ENCODE measurements at regions of chr1 and their contacts with region 1.

Region 1: DNA sequence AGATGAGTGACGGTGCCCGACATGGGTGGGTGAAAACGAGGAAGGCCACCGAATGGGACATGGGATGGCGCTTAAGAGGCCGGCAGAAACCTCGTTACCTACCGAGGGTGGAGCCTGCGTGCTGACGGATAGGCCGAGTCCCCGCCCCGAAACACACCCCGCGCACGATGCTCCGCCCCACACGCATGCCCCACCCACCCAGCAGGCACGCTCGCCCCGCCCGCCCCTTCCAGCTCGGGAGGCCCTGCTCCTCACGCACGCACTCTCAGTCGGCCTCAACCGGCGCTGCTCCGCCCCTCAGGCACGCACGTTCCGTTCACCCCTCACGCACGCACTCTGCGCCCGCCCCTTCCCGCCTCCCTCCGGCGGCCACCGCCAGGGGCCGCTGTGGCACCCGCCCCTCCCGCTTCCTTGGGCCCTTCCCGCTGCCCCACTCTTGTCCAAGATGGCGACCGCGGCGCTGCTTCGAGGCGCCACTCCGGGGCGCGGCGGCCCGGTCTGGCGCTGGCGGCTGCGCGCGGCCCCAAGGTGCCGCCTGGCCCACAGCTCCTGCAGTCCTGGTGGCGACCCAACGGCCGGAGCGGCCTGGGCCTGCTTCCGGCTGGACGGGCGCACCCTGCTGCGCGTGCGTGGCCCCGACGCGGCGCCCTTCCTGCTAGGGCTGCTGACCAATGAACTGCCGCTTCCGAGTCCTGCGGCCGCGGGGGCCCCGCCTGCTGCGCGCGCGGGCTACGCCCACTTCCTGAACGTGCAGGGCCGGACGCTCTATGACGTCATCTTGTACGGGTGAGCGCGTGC is at the start of gene IBA57:
- DNase-seq: peak; percentile 99 to 100 (median 100)
- ATAC-seq: peak; percentile 77 to 79
- H3K4me3 Mint-ChIP-seq: peak within 1 kb of the TSS; percentile 81 to 93 (median 90)
- H3K27ac Mint-ChIP-seq: peak within 1 kb of the TSS; percentile 89 to 99 (median 97)
- H3K4me1 Mint-ChIP-seq: peaks cover 26 to 67% (median 57%) of the 10 kb centered on the region in 4 donors
- H3K27me3 Mint-ChIP-seq: no peaks in the 10 kb centered on the region
- polyA plus RNA-seq, gene IBA57: 3.3 to 4.2 (median 3.4) TPM

Region 2: DNA sequence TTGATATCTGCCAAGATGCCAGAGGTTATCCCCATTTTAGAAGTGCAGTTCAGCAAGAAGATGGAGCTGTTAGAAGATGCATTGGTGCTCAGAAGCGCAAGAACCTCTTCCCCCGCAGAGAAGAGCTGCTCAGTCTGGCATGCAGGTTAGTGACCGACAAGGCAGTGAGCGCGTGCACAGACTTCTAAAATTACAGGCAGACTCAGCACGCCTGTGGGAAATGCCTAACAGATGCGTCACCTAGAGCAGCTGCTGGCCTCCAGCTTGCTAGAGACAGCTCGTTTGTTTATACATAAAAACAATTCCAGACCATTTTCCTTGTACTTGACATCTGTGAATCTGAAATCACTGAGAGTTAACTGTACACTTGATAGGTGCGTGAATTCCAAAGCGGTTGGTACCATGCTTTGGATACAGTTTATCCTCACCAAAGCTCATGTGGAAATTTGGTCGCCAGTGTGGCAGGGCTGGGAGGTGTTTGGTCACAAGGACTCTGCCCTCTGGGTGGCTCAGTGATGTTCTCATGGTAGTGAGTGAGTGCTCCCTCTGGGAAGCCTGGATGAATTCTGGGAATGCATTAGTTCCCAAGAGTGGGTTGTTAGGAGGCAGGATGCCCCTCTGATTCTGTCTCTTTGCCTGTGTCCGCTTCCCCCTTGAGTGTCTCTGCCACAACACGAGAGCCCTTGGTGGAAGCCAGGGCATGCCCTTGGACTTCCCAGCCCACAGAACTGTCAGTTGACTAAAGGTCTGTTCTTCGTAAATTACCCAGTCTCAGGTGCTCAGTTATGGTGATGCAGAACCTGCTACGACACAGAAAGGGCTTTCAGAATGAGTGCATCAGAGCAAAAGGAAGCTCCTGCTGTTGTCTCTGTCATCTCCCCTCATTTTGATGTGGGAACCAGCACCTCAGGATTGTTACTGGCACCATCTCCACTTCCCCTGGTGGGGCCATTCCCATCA is 405.9 kb before region 1 on chr1:
- POLR2A ChIA-PET with region 1: no interaction called
- DNase-seq: no peak
- ATAC-seq: no peak
- H3K4me3 Mint-ChIP-seq: no peak overlapping the region
- H3K27ac Mint-ChIP-seq: peak overlapping the region in 2 of 10 donors; percentile 36 to 57
- H3K4me1 Mint-ChIP-seq: peaks cover 17 to 41% (median 40%) of the 10 kb centered on the region in 4 donors
- H3K27me3 Mint-ChIP-seq: no peaks in the 10 kb centered on the region

Region 3: GRCh38 chr1:228109073-228109961 is 56.3 kb before region 1 on chr1 and contains the start of gene MRPL55:
- POLR2A ChIA-PET with region 1: interaction called, 10 read pairs
- DNase-seq: peak; percentile 96 to 100 (median 98)
- ATAC-seq: peak; percentile 90
- H3K4me3 Mint-ChIP-seq: peak within 1 kb of the TSS; percentile 88 to 98 (median 94)
- H3K27ac Mint-ChIP-seq: peak within 1 kb of the TSS; percentile 93 to 99 (median 97)
- H3K4me1 Mint-ChIP-seq: peaks cover 9 to 33% (median 31%) of the 10 kb centered on the region in 4 donors
- H3K27me3 Mint-ChIP-seq: no peaks in the 10 kb centered on the region
- polyA plus RNA-seq, gene MRPL55: 96.9 to 130 (median 103) TPM

Region 4: DNA sequence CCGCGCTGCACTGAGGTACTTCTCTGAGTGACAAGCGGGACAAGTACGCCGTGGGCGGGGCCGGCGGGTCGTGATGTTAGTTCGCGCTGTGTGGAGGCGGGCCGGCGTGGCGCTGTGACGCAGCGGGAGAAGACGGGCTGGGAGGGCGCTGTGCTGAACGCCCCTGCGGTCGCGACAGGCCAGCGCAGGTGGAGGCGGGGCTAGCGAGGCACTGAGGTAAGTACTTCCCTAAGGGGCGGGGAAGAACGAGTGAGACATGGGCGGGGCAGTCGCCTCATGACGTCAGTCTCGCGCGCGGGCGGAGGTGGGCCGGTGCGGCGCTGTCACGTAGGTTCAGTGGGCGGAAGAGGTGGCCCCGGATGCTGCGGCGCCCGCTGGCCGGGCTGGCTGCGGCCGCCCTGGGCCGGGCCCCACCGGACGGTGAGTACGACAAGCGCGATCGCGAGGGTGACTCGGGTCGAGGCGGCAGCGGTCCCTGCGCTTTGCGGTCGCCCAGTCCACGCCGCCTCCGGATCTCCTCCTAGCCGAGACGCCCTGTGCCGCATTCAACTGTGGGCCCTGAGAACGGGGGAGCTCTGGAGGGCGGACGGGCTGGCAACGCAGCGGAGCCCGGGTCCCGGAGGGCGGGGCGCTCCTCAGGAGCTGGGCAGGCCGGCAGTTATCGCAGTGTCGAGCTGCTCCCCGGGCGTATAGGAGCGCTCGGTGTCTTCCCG is 25.5 kb before region 1 on chr1 and contains the start of gene GUK1:
- POLR2A ChIA-PET with region 1: interaction called, 128 read pairs
- DNase-seq: peak; percentile 99 to 100 (median 100)
- ATAC-seq: peak; percentile 84
- H3K4me3 Mint-ChIP-seq: peak within 1 kb of the TSS; percentile 83 to 99 (median 96)
- H3K27ac Mint-ChIP-seq: peak within 1 kb of the TSS; percentile 96 to 100 (median 100)
- H3K4me1 Mint-ChIP-seq: peaks cover 10 to 66% (median 42%) of the 10 kb centered on the region in 4 donors
- H3K27me3 Mint-ChIP-seq: no peaks in the 10 kb centered on the region
- polyA plus RNA-seq, gene GUK1: 369 to 466 (median 374) TPM

Region 5: GRCh38 chr1:228190192-228190591 is 24.6 kb after region 1 on chr1:
- POLR2A ChIA-PET with region 1: no interaction called
- DNase-seq: no peak
- ATAC-seq: no peak
- H3K4me3 Mint-ChIP-seq: no peak overlapping the region
- H3K27ac Mint-ChIP-seq: no peak overlapping the region
- H3K4me1 Mint-ChIP-seq: peaks cover 6 to 18% (median 12%) of the 10 kb centered on the region in 4 donors
- H3K27me3 Mint-ChIP-seq: no peaks in the 10 kb centered on the region

Region 6: DNA sequence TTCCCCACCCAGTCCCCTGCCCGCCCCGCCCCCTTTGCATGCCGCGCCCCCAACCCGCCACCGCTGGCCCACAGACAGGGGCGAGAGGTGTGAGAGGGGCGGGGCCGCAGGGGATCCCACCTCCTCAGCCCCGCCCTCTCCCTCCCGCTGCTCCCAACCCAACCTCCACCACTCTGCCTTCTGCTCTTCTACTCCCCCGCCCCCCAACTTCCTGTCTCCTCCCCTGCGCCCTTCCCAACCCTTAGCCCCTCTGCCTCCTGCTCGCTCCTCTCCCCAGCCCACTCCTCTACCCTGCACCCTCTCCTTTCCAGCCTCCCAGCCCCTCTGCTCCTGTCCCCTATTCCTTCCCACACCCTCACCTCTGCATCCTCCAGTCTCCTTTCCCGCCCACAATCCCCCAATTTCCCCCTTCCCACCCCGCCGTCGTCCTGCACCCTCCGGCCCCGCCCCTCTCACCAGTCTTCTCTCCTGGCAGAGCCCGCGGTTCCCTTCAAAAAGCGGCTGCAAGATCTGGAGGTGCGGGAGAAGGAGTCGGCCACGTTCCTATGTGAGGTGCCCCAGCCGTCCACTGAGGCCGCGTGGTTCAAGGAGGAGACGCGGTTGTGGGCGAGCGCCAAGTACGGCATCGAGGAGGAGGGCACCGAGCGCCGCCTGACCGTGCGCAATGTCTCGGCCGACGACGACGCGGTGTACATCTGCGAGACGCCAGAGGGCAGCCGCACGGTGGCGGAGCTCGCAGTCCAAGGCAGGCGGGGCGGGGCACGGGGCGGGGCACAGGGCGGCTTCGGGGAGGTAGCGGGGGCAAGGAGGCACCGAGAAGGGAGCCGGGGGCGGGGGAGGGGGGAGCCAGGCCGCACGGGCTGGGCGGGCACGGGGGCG is 47.6 kb after region 1 on chr1:
- POLR2A ChIA-PET with region 1: interaction called, 13 read pairs
- DNase-seq: peak; percentile 78 to 95 (median 86)
- ATAC-seq: peak; percentile 90 to 95
- H3K4me3 Mint-ChIP-seq: peak overlapping the region; percentile 86 to 94 (median 92)
- H3K27ac Mint-ChIP-seq: peak overlapping the region; percentile 44 to 97 (median 92)
- H3K4me1 Mint-ChIP-seq: peaks cover 3 to 18% (median 9%) of the 10 kb centered on the region in 4 donors
- H3K27me3 Mint-ChIP-seq: no peaks in the 10 kb centered on the region

Region 7: GRCh38 chr1:228837817-228838716 is 672.5 kb after region 1 on chr1:
- POLR2A ChIA-PET with region 1: no interaction called
- DNase-seq: no peak
- ATAC-seq: no peak
- H3K4me3 Mint-ChIP-seq: no peak overlapping the region
- H3K27ac Mint-ChIP-seq: peak overlapping the region in 2 of 10 donors; percentile 60 to 69
- H3K4me1 Mint-ChIP-seq: no peaks in the 10 kb centered on the region
- H3K27me3 Mint-ChIP-seq: peaks cover 0 to 2% (median 0%) of the 10 kb centered on the region in 5 donors